ENCODE measurements at regions of chr6 and their contacts with region 1.

Region 1: GRCh38 chr6:20534295-20535262 is at the start of gene CDKAL1:
- DNase-seq: peak; percentile 65
- H3K4me3 ChIP-seq: peak within 1 kb of the TSS; percentile 80
- CTCF ChIP-seq: no peak

Region 2: GRCh38 chr6:20291764-20292580 is 242.6 kb before region 1 on chr6:
- CTCF ChIA-PET with region 1: interaction called, 31 read pairs
- POLR2A ChIA-PET with region 1: no interaction called
- DNase-seq: peak; percentile 52
- H3K4me3 ChIP-seq: no peak overlapping the region
- CTCF ChIP-seq: peak; percentile 87

Region 3: DNA sequence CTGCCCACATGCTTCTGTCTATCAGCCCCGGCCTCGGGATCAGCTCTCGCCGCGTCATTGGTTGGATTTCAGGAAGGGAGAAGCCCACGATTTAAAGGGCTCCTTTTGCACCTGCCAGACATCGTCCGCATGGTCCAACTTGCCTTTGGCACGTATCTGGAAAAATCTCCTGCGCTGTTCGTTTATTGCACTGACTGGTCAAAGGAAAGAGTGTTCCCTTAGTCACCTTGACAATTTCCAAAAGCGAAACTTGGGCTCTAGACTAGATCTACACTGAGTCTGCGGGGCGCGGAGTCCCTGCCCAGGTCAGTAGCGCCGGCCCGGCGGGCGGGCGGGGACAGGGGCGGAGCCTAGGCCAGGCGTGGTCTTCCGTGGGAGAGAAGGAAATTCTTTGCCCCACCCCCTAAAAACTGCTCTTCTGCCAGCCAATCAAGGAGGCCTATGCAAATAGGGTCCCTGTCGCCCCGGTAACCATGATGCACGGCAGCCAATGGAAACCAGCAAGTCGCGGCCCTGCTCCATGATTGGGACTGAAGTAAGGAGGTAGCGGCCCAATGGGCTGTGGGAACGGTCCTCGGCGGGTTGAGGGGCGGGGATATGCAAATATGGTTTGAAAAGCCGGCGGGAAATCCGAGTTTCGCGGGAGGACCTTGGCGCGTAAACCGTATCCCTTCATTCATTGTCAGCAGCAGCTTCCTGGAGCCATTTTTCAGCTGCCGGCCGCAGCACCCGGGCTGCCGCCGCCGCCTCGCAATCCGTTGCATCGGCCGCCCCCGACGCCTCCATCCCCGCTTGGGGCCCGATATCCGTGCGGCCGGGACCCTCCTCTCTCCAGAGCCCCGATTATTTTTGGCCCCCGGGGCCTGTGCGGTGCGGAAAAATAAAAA is 133.1 kb before region 1 on chr6 and contains the start of gene E2F3:
- CTCF ChIA-PET with region 1: interaction called, 21 read pairs
- POLR2A ChIA-PET with region 1: no interaction called
- DNase-seq: peak; percentile 99
- H3K4me3 ChIP-seq: peak within 1 kb of the TSS; percentile 78
- CTCF ChIP-seq: no peak